ENCODE measurements at regions of chr19 and their contacts with region 1.

Region 1: GRCh38 chr19:1131738-1132551 is 28.2 kb downstream of the GPX4 start:
- DNase-seq: peak; percentile 96
- ATAC-seq: peak; percentile 60
- H3K4me3 Mint-ChIP-seq: peak overlapping the region; percentile 91
- H3K27ac Mint-ChIP-seq: peak overlapping the region; percentile 96
- H3K4me1 Mint-ChIP-seq: peaks cover 46% of the 10 kb centered on the region
- H3K27me3 Mint-ChIP-seq: no peaks in the 10 kb centered on the region

Region 2: GRCh38 chr19:1064661-1065605 is 67.0 kb before region 1 on chr19:
- CTCF ChIA-PET with region 1: no interaction called
- POLR2A ChIA-PET with region 1: no interaction called
- intact Hi-C with region 1: loop called in 1 of 2 experiments (anchors 2 kb)
- DNase-seq: peak; percentile 86
- ATAC-seq: peak; percentile 48
- H3K4me3 Mint-ChIP-seq: no peak overlapping the region
- H3K27ac Mint-ChIP-seq: no peak overlapping the region
- H3K4me1 Mint-ChIP-seq: peaks cover 33% of the 10 kb centered on the region
- H3K27me3 Mint-ChIP-seq: no peaks in the 10 kb centered on the region

Region 3: GRCh38 chr19:1103708-1104310 is 28.1 kb before region 1 on chr19 and contains the start of gene GPX4:
- CTCF ChIA-PET with region 1: no interaction called
- POLR2A ChIA-PET with region 1: interaction called, 12 read pairs
- intact Hi-C with region 1: loop called (anchors 1 to 5 kb)
- DNase-seq: peak; percentile 100
- ATAC-seq: peak; percentile 81
- H3K4me3 Mint-ChIP-seq: peak within 1 kb of the TSS; percentile 71
- H3K27ac Mint-ChIP-seq: peak within 1 kb of the TSS; percentile 83
- H3K4me1 Mint-ChIP-seq: peaks cover 52% of the 10 kb centered on the region
- H3K27me3 Mint-ChIP-seq: no peaks in the 10 kb centered on the region
- total RNA-seq, gene GPX4: 192 to 218 TPM

Region 4: GRCh38 chr19:1189419-1189818 is 57.5 kb after region 1 on chr19:
- CTCF ChIA-PET with region 1: interaction called, 7 read pairs
- POLR2A ChIA-PET with region 1: interaction called, 3 read pairs
- intact Hi-C with region 1: loop called (anchors 5 kb)
- DNase-seq: peak; percentile 85
- ATAC-seq: peak; percentile 84
- H3K4me3 Mint-ChIP-seq: peak overlapping the region; percentile 38
- H3K27ac Mint-ChIP-seq: peak overlapping the region; percentile 69
- H3K4me1 Mint-ChIP-seq: peaks cover 34% of the 10 kb centered on the region
- H3K27me3 Mint-ChIP-seq: no peaks in the 10 kb centered on the region

Region 5: DNA sequence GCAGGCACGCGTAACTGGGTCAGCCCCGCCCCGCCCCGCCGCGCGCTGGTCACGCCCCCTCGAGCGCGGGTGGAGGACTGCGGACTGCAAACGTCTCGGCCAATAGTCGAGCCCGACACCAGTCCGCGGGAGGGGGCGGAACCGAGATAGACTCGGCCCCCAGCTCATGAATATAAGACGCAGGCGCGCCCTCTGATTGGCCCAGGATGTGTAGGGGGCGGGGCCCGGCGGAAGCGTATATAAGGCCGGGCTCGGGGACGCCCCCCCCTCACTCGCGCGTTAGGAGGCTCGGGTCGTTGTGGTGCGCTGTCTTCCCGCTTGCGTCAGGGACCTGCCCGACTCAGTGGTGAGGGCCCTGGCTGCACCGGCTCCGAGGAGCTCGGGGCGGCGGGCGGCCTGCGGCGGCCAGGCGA is 137.1 kb after region 1 on chr19 and contains the start of gene CIRBP:
- CTCF ChIA-PET with region 1: no interaction called
- POLR2A ChIA-PET with region 1: interaction called, 6 read pairs
- intact Hi-C with region 1: loop called in 1 of 2 experiments (anchors 1 kb)
- DNase-seq: peak; percentile 100
- ATAC-seq: peak; percentile 87
- H3K4me3 Mint-ChIP-seq: peak within 1 kb of the TSS; percentile 84
- H3K27ac Mint-ChIP-seq: peak within 1 kb of the TSS; percentile 87
- H3K4me1 Mint-ChIP-seq: peaks cover 66% of the 10 kb centered on the region
- H3K27me3 Mint-ChIP-seq: no peaks in the 10 kb centered on the region
- total RNA-seq, gene CIRBP: 123 to 188 TPM

Measured in activated CD4-positive, alpha-beta T cell treated with anti-CD3 and anti-CD28 coated beads for 36 hours (primary cell).